Activated CD8-positive, alpha-beta memory T cell treated with anti-CD3 and anti-CD28 coated beads, Interleukin-2, amount 10 ng/mL, durations not matched to agents 7 days and 5 days (primary cell): ENCODE measurements at regions of chr1 and their contacts with region 1.

Region 1: DNA sequence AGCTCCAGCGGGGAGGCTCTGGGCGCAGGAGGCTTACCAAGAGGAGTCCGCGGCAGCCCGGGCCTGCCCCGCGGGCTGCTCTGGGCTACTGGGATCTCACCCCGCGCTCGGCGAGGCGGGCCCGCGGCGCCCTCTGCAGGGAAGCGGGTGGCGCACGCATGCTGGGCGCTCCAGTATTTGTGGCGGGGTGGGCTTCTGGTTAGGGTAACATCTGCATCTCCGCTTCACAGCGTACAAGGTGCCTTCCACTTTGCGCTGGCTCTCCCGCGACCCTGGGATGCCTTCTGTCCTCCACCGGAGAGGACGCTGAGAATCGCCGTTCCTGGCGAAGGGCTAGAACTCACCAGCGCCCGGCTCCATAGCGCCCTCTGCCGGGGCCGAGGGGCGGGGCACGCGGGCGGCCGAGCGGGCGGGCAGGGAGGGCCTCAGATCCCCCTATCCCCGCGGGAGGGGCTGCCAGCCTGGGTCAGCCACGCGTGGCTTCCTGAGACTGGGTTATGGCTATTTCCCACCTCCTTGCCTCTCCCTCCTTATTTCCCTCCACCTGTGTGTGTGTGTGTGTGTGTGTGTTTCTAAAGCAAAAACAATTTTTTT is 46.6 kb upstream of the CTBS start:
- DNase-seq: peak; percentile 85
- ATAC-seq: peak; percentile 95
- H3K4me3 Mint-ChIP-seq: peak overlapping the region; percentile 86
- H3K27ac Mint-ChIP-seq: peak overlapping the region; percentile 89
- H3K4me1 Mint-ChIP-seq: peaks cover 22% of the 10 kb centered on the region
- H3K27me3 Mint-ChIP-seq: no peaks in the 10 kb centered on the region

Region 2: DNA sequence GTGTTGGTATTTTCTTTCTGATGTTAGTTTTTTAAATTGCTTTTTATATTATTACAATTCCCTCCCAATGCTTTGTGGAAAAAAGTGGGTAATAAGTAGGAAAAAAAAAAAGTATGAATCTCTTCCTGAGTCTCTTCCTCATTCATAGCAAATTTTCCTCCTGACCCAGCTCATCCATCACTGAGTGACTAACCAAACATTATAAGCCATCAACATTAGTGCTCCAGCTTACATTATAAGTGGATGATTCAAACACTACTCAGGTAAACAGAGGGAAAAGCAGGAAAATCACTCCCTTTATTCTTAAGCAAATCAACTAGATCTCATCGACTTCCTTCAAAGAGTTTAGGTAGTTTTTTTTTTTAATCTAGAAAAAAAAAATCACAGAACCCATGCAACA is 334.7 kb before region 1 on chr1:
- CTCF ChIA-PET with region 1: no interaction called
- DNase-seq: no peak
- ATAC-seq: no peak
- H3K4me3 Mint-ChIP-seq: no peak overlapping the region
- H3K27ac Mint-ChIP-seq: no peak overlapping the region
- H3K4me1 Mint-ChIP-seq: no peaks in the 10 kb centered on the region
- H3K27me3 Mint-ChIP-seq: peaks cover 7% of the 10 kb centered on the region

Region 3: DNA sequence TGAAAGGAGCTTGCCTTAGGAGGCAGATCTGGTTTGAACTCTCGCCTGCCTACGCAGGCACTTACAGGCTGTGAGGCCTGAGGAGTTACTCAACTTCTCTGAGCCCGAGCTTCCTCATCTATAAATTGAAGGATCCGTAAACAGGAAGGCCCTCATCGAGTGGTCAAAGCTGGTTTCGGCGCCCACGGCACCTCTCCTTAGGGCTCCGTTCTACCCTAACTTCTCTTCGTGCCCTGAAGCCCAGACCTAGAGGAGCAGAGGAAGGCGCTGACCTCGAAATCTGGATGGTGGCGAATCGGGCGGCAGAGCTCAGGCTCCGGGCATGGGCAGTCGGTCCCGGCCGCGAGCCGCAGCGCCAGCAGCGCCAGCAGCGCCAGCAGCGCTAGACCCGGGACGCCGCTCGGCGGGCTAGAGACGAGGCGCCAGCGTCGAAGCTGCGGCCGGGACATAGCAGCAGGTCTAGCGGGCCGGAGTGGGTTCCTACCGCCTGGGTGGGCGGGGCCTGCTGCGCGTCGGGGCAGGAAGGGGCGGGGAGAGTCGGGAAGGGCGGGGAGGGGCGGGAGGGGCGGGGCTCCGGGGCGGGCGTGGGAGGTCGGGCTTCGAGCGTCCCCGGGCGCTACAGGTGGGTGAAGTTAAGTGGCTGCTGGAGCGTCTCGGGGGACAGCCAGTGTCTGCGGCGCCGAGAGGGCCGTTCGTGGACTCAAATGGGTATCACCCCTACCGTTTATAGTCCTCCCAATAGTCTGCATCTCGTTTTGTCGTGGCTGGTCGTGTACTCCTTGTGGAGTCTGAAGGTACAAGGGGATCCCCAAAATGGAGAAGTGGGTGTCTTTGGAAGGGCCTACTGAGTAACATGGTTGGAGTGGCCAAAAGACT is 46.6 kb before region 1 on chr1 and contains the start of gene CTBS:
- CTCF ChIA-PET with region 1: interaction called, 19 read pairs
- DNase-seq: peak; percentile 90
- ATAC-seq: peak; percentile 88
- H3K4me3 Mint-ChIP-seq: peak within 1 kb of the TSS; percentile 94
- H3K27ac Mint-ChIP-seq: peak within 1 kb of the TSS; percentile 99
- H3K4me1 Mint-ChIP-seq: peaks cover 39% of the 10 kb centered on the region
- H3K27me3 Mint-ChIP-seq: no peaks in the 10 kb centered on the region
- total RNA-seq, gene CTBS: 13.6 to 18.7 TPM